Activated CD4-positive, alpha-beta T cell treated with anti-CD3 and anti-CD28 coated beads for 36 hours (primary cell): ENCODE measurements at regions of chr3 and their contacts with region 1.

Region 1: GRCh38 chr3:153026026-153026425 is 136.0 kb upstream of the RAP2B start:
- DNase-seq: no peak
- ATAC-seq: no peak
- H3K4me3 Mint-ChIP-seq: no peak overlapping the region
- H3K27ac Mint-ChIP-seq: no peak overlapping the region
- H3K4me1 Mint-ChIP-seq: no peaks in the 10 kb centered on the region
- H3K27me3 Mint-ChIP-seq: peaks cover 1% of the 10 kb centered on the region

Region 2: GRCh38 chr3:153595186-153595815 is 569.3 kb after region 1 on chr3:
- CTCF ChIA-PET with region 1: no interaction called
- POLR2A ChIA-PET with region 1: no interaction called
- intact Hi-C with region 1: loop called in 1 of 2 experiments (anchors 5 kb)
- DNase-seq: no peak
- ATAC-seq: no peak
- H3K4me3 Mint-ChIP-seq: no peak overlapping the region
- H3K27ac Mint-ChIP-seq: no peak overlapping the region
- H3K4me1 Mint-ChIP-seq: no peaks in the 10 kb centered on the region
- H3K27me3 Mint-ChIP-seq: no peaks in the 10 kb centered on the region

Region 3: DNA sequence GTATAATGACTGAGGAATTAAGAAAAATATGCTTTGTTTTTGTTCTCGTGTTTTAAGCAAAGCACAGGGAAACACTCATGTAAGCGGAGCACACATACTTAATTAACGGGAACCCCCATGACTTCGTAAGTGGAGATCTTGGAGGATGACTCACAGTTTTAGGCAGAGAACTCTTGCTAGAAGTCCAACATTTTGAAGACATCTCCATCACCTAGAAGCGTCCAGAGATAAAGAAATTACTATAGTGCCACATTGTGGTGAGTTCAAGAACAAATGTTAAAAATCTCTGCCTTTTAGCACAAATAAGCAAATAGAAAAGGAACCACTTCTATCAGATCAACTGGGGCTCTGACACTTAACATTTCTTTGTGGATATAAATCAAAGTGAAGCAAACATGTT is 901.1 kb after region 1 on chr3:
- CTCF ChIA-PET with region 1: no interaction called
- POLR2A ChIA-PET with region 1: no interaction called
- intact Hi-C with region 1: loop called in 1 of 2 experiments (anchors 5 kb)
- DNase-seq: no peak
- ATAC-seq: no peak
- H3K4me3 Mint-ChIP-seq: no peak overlapping the region
- H3K27ac Mint-ChIP-seq: no peak overlapping the region
- H3K4me1 Mint-ChIP-seq: no peaks in the 10 kb centered on the region
- H3K27me3 Mint-ChIP-seq: peaks cover 6% of the 10 kb centered on the region

Region 4: GRCh38 chr3:154018100-154018696 is 992.2 kb after region 1 on chr3:
- CTCF ChIA-PET with region 1: interaction called, 4 read pairs
- POLR2A ChIA-PET with region 1: no interaction called
- intact Hi-C with region 1: loop called in 1 of 2 experiments (anchors 5 kb)
- DNase-seq: peak; percentile 57
- ATAC-seq: no peak
- H3K4me3 Mint-ChIP-seq: no peak overlapping the region
- H3K27ac Mint-ChIP-seq: no peak overlapping the region
- H3K4me1 Mint-ChIP-seq: no peaks in the 10 kb centered on the region
- H3K27me3 Mint-ChIP-seq: peaks cover 4% of the 10 kb centered on the region